CD4-positive, alpha-beta memory T cell (primary cell): ENCODE measurements at regions of chr13 and their contacts with region 1.

Region 1: GRCh38 chr13:32427852-32428580 is at the start of gene N4BP2L1:
- DNase-seq: peak; percentile 80 to 94 (median 82)
- H3K4me3 ChIP-seq: peak within 1 kb of the TSS; percentile 77 to 85
- H3K4me3 Mint-ChIP-seq: peak within 1 kb of the TSS; percentile 94 to 99 (median 96)
- H3K27ac ChIP-seq: peak within 1 kb of the TSS; percentile 84
- H3K27ac Mint-ChIP-seq: peak within 1 kb of the TSS; percentile 96 to 99 (median 98)
- H3K4me1 ChIP-seq: peaks cover 46% of the 10 kb centered on the region
- H3K4me1 Mint-ChIP-seq: peaks cover 27 to 54% (median 40%) of the 10 kb centered on the region in 4 donors
- H3K27me3 ChIP-seq: no peaks in the 10 kb centered on the region
- H3K27me3 Mint-ChIP-seq: no peaks in the 10 kb centered on the region
- total RNA-seq, gene N4BP2L1: 51.6 to 51.9 TPM

Region 2: DNA sequence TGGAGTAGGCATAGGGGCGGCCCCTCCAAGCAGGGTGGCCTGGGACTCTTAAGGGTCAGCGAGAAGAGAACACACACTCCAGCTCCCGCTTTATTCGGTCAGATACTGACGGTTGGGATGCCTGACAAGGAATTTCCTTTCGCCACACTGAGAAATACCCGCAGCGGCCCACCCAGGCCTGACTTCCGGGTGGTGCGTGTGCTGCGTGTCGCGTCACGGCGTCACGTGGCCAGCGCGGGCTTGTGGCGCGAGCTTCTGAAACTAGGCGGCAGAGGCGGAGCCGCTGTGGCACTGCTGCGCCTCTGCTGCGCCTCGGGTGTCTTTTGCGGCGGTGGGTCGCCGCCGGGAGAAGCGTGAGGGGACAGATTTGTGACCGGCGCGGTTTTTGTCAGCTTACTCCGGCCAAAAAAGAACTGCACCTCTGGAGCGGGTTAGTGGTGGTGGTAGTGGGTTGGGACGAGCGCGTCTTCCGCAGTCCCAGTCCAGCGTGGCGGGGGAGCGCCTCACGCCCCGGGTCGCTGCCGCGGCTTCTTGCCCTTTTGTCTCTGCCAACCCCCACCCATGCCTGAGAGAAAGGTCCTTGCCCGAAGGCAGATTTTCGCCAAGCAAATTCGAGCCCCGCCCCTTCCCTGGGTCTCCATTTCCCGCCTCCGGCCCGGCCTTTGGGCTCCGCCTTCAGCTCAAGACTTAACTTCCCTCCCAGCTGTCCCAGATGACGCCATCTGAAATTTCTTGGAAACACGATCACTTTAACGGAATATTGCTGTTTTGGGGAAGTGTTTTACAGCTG is 112.6 kb before region 1 on chr13 and contains the starts of genes BRCA2 and ZAR1L:
- CTCF ChIA-PET with region 1: interaction called, 8 read pairs
- POLR2A ChIA-PET with region 1: interaction called, 82 read pairs
- intact Hi-C with region 1: loop called (anchors 1 kb)
- DNase-seq: peak; percentile 85 to 89 (median 87)
- H3K4me3 ChIP-seq: peak within 1 kb of the TSS; percentile 59 to 81
- H3K4me3 Mint-ChIP-seq: peak within 1 kb of the TSS; percentile 91 to 100 (median 96)
- H3K27ac ChIP-seq: peak within 1 kb of the TSS; percentile 99
- H3K27ac Mint-ChIP-seq: peak within 1 kb of the TSS; percentile 98 to 100 (median 100)
- H3K4me1 ChIP-seq: peaks cover 16% of the 10 kb centered on the region
- H3K4me1 Mint-ChIP-seq: peaks cover 7 to 27% (median 11%) of the 10 kb centered on the region in 4 donors
- H3K27me3 ChIP-seq: no peaks in the 10 kb centered on the region
- H3K27me3 Mint-ChIP-seq: no peaks in the 10 kb centered on the region
- total RNA-seq, gene BRCA2: 3.2 TPM
- total RNA-seq, gene ZAR1L: not detected

Region 3: GRCh38 chr13:32413284-32413683 is 14.7 kb before region 1 on chr13:
- CTCF ChIA-PET with region 1: interaction called, 7 read pairs
- POLR2A ChIA-PET with region 1: interaction called, 7 read pairs
- intact Hi-C with region 1: loop called (anchors 2 kb)
- DNase-seq: no peak
- H3K4me3 ChIP-seq: no peak overlapping the region
- H3K4me3 Mint-ChIP-seq: no peak overlapping the region
- H3K27ac ChIP-seq: no peak overlapping the region
- H3K27ac Mint-ChIP-seq: no peak overlapping the region
- H3K4me1 ChIP-seq: no peaks in the 10 kb centered on the region
- H3K4me1 Mint-ChIP-seq: peaks cover 15 to 37% (median 21%) of the 10 kb centered on the region in 4 donors
- H3K27me3 ChIP-seq: no peaks in the 10 kb centered on the region
- H3K27me3 Mint-ChIP-seq: no peaks in the 10 kb centered on the region